ENCODE measurements at regions of chr17 and their contacts with region 1.

Region 1: GRCh38 chr17:43352579-43353331 is 46.0 kb upstream of the ARL4D start:
- DNase-seq: no peak
- ATAC-seq: no peak
- H3K4me3 ChIP-seq: no peak overlapping the region
- H3K4me3 Mint-ChIP-seq: no peak overlapping the region
- H3K27ac ChIP-seq: no peak overlapping the region
- H3K27ac Mint-ChIP-seq: no peak overlapping the region
- H3K4me1 ChIP-seq: no peaks in the 10 kb centered on the region
- H3K4me1 Mint-ChIP-seq: no peaks in the 10 kb centered on the region
- H3K27me3 ChIP-seq: no peaks in the 10 kb centered on the region
- H3K27me3 Mint-ChIP-seq: no peaks in the 10 kb centered on the region
- CTCF ChIP-seq: no peak

Region 2: GRCh38 chr17:42027961-42028790 is 1324.6 kb before region 1 on chr17:
- CTCF ChIA-PET with region 1: no interaction called
- POLR2A ChIA-PET with region 1: no interaction called
- intact Hi-C with region 1: no loop called
- DNase-seq: no peak
- ATAC-seq: no peak
- H3K4me3 ChIP-seq: no peak overlapping the region
- H3K4me3 Mint-ChIP-seq: no peak overlapping the region
- H3K27ac ChIP-seq: no peak overlapping the region
- H3K27ac Mint-ChIP-seq: no peak overlapping the region
- H3K4me1 ChIP-seq: peaks cover 11 to 14% of the 10 kb centered on the region in 2 donors
- H3K4me1 Mint-ChIP-seq: peaks cover 13% of the 10 kb centered on the region
- H3K27me3 ChIP-seq: peaks cover 0 to 3% (median 0%) of the 10 kb centered on the region in 4 experiments
- H3K27me3 Mint-ChIP-seq: no peaks in the 10 kb centered on the region
- CTCF ChIP-seq: no peak

Region 3: GRCh38 chr17:43309505-43310332 is 43.0 kb before region 1 on chr17:
- CTCF ChIA-PET with region 1: no interaction called
- POLR2A ChIA-PET with region 1: interaction called, 10 read pairs
- intact Hi-C with region 1: no loop called
- DNase-seq: peak; percentile 55
- ATAC-seq: no peak
- H3K4me3 ChIP-seq: no peak overlapping the region
- H3K4me3 Mint-ChIP-seq: no peak overlapping the region
- H3K27ac ChIP-seq: peak overlapping the region in 1 of 2 donors; percentile 49
- H3K27ac Mint-ChIP-seq: peak overlapping the region; percentile 32
- H3K4me1 ChIP-seq: no peaks in the 10 kb centered on the region
- H3K4me1 Mint-ChIP-seq: peaks cover 5% of the 10 kb centered on the region
- H3K27me3 ChIP-seq: no peaks in the 10 kb centered on the region
- H3K27me3 Mint-ChIP-seq: no peaks in the 10 kb centered on the region
- CTCF ChIP-seq: no peak

Measured in B cell (primary cell).